A673 (cell line): ENCODE measurements at regions of chr3 and their contacts with region 1.

Region 1: DNA sequence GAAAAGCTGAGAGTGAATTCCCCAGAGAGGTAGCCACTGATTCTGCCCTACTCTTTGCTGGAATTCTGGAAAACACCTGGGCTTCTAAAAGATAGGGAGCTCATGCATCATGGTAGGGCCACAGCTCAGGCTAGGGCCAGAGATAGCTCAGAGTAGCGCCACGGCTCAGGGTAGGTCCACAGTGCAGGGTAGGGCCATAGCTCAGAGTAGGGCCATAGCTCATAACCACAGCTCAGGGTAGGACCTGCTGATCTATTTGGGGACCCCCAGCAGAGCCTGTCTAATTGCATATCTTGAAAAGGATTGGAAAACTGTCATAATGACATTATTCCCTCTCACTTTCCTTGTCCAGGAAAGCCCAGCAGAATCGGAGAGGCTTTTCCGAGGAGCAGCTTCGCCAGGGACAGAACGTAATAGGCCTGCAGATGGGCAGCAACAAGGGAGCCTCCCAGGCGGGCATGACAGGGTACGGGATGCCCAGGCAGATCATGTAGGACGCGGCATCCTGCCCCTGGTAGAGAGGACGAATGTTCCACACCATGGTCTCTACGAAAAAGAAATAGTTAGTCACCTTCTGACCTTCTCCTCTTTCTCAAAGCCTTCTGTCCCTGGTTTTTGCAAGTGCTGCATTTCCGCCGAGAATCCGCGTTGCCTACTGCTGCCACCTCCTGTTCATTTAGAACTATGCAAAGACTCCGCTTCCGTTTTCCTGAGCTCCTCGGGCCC is 14.5 kb downstream of the TAGLN3 start:
- DNase-seq: peak; percentile 84
- H3K4me3 ChIP-seq: no peak overlapping the region
- H3K27ac ChIP-seq: no peak overlapping the region
- H3K4me1 ChIP-seq: peaks cover 29% of the 10 kb centered on the region
- H3K27me3 ChIP-seq: no peaks in the 10 kb centered on the region
- CTCF ChIP-seq: peak; percentile 85

Region 2: GRCh38 chr3:111895079-111895478 is 118.1 kb before region 1 on chr3:
- CTCF ChIA-PET with region 1: interaction called, 24 read pairs
- POLR2A ChIA-PET with region 1: no interaction called
- intact Hi-C with region 1: no loop called
- DNase-seq: peak; percentile 79
- H3K4me3 ChIP-seq: no peak overlapping the region
- H3K27ac ChIP-seq: no peak overlapping the region
- H3K4me1 ChIP-seq: no peaks in the 10 kb centered on the region
- H3K27me3 ChIP-seq: no peaks in the 10 kb centered on the region
- CTCF ChIP-seq: peak; percentile 78

Region 3: GRCh38 chr3:111978493-111979433 is 34.5 kb before region 1 on chr3 and contains the start of gene ABHD10:
- CTCF ChIA-PET with region 1: interaction called, 16 read pairs
- POLR2A ChIA-PET with region 1: interaction called, 3 read pairs
- intact Hi-C with region 1: no loop called
- DNase-seq: peak; percentile 99
- H3K4me3 ChIP-seq: peak within 1 kb of the TSS; percentile 61
- H3K27ac ChIP-seq: peak within 1 kb of the TSS; percentile 83
- H3K4me1 ChIP-seq: peaks cover 7% of the 10 kb centered on the region
- H3K27me3 ChIP-seq: no peaks in the 10 kb centered on the region
- CTCF ChIP-seq: no peak
- total RNA-seq, gene ABHD10: 39.7 and 40.7 TPM in 2 replicates

Region 4: DNA sequence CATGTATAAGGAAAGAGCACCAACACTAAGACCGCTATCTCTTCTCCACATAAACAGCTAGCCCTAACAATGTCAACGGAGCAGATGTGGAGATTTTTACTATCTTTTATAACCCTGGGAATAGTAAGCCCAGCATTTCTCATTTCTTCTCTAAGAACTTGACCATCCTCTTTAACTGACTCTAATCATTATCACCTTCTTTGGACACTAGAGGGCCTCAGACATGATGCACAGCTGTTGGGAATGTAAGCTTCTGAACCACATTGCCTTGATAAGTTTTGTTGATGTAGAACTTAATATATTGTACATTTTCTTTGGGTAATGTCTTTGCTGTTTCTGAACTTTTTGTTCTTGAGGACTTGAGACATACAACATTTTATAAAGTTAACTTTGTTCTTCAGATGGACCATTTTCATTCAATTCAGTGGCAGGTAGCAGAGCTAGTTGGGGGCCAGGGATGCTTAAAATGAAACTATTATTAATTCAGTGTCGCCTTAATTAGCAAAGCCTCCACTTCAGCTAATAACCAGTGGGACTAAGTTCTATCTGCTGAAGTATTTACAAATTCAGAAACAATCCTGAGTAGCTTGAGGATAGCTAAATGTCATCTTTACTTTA is 24.1 kb before region 1 on chr3:
- CTCF ChIA-PET with region 1: interaction called, 24 read pairs
- POLR2A ChIA-PET with region 1: no interaction called
- intact Hi-C with region 1: loop called (anchors 1 kb)
- DNase-seq: peak; percentile 71
- H3K4me3 ChIP-seq: no peak overlapping the region
- H3K27ac ChIP-seq: no peak overlapping the region
- H3K4me1 ChIP-seq: no peaks in the 10 kb centered on the region
- H3K27me3 ChIP-seq: no peaks in the 10 kb centered on the region
- CTCF ChIP-seq: peak; percentile 83